ENCODE measurements at regions of chr6 and their contacts with region 1.

Region 1: GRCh38 chr6:33154349-33154748 is 37.9 kb downstream of the COL11A2 start:
- DNase-seq: no peak
- H3K4me3 ChIP-seq: no peak overlapping the region
- H3K27ac ChIP-seq: no peak overlapping the region
- H3K4me1 ChIP-seq: no peaks in the 10 kb centered on the region
- H3K27me3 ChIP-seq: no peaks in the 10 kb centered on the region
- CTCF ChIP-seq: no peak

Region 2: GRCh38 chr6:33118525-33119123 is 35.7 kb before region 1 on chr6:
- intact Hi-C with region 1: loop called (anchors 5 kb)
- DNase-seq: no peak
- H3K4me3 ChIP-seq: no peak overlapping the region
- H3K27ac ChIP-seq: no peak overlapping the region
- H3K4me1 ChIP-seq: no peaks in the 10 kb centered on the region
- H3K27me3 ChIP-seq: peaks cover 13% of the 10 kb centered on the region
- CTCF ChIP-seq: peak; percentile 85

Region 3: GRCh38 chr6:33213166-33213988 is 59.0 kb after region 1 on chr6:
- intact Hi-C with region 1: no loop called
- DNase-seq: no peak
- H3K4me3 ChIP-seq: peak overlapping the region; percentile 7
- H3K27ac ChIP-seq: no peak overlapping the region
- H3K4me1 ChIP-seq: no peaks in the 10 kb centered on the region
- H3K27me3 ChIP-seq: no peaks in the 10 kb centered on the region
- CTCF ChIP-seq: no peak

Region 4: DNA sequence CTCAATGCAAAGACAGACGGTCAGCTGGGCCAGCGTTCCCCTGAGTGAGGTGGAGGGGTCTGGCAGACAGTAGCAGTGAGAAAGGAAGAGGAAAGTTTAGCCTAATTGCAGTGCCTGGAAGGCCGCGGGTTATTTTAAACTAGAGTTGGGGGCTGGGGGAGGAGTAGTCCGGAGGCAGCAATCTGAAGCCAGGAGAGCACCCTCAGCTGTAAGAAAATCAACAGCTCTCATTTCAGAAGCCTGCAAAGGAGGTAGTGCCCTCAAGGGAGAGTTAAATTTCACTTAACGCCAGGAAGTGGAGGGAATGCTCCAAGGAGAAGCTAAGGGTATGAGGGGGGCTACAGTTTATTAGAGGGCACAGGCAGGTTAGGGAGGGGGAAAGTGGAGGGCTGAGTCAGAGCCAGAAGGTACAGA is 80.9 kb after region 1 on chr6:
- intact Hi-C with region 1: no loop called
- DNase-seq: no peak
- H3K4me3 ChIP-seq: no peak overlapping the region
- H3K27ac ChIP-seq: no peak overlapping the region
- H3K4me1 ChIP-seq: no peaks in the 10 kb centered on the region
- H3K27me3 ChIP-seq: no peaks in the 10 kb centered on the region
- CTCF ChIP-seq: no peak

Measured in colonic mucosa (tissue), 4 donors.